ENCODE measurements at regions of chr3 and their contacts with region 1.

Region 1: DNA sequence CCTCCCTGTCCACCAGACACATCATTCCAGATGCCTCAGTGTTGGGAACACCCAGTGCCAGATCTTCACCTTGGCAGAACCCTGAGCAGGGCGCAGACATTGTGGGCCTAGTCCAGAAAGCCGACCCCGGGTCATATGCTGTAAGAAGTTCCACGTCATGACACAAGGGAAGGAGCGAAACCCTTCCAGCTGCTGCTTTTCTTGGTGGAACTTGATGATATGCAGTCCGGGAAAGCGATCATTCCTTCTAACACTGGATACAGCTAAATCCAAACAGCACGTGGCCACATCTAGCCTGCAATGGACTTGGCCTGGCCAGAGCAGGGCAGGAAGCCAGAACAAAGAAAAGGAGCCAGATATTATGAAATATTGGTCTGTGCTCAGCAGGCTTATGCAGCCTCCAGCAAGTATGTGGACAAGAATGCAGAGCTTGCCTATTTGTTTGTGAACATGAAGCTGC is 22.0 kb downstream of the GASK1A start:
- DNase-seq: peak; percentile 89 to 94
- ATAC-seq: peak; percentile 92 to 93
- H3K4me3 ChIP-seq: peak overlapping the region in 3 of 4 donors; percentile 16 to 41 (median 27)
- H3K27ac ChIP-seq: peak overlapping the region; percentile 73 to 81 (median 80)
- H3K4me1 ChIP-seq: peaks cover 41 to 47% of the 10 kb centered on the region in 2 donors
- H3K27me3 ChIP-seq: no peaks in the 10 kb centered on the region
- CTCF ChIP-seq: no peak
- POLR2A ChIP-seq: no peak

Region 2: DNA sequence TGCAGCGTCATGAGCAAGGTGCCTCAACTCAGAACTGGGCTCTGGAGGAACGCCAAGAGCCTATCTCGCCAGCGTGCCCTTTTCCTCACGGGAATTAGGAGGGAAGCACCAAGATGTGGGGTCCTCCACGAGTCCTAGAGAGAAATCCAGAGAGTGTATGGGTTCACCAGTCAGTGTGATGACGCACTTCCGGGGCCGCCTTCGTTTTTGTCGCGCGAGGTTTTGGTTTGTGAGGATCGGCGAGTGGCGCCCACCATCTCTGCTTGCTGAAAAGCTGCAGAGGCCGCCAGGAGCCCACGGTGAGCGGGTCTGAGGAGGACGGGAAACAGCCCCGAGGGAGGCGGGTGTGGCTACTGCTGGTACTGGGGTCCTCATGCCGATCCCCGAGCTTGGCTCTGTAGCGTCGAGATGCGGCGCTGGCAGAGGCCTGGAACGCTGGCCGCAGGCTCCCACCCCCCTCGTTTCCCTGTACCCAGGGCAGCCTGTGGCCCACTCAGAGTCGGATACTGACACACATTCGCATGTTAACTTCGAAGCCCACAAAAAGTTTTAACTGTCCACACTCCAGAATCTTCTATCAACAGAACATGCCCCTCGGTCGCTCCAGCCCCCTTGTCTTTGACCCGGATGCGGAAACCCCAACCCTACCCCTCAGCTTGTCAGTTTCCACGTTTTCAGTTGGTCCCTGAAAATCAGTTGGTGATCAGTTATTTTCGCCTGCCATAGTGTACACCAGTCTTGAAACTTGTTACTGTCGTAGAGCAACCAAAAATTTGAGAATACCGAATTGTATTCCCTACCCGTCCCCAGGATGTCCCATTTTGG is 64.8 kb before region 1 on chr3:
- in situ Hi-C with region 1: no loop called
- intact Hi-C with region 1: no loop called
- DNase-seq: no peak
- ATAC-seq: no peak
- H3K4me3 ChIP-seq: peak overlapping the region in 3 of 4 donors; percentile 12 to 43 (median 42)
- H3K27ac ChIP-seq: no peak overlapping the region
- H3K4me1 ChIP-seq: no peaks in the 10 kb centered on the region
- H3K27me3 ChIP-seq: no peaks in the 10 kb centered on the region
- CTCF ChIP-seq: no peak
- POLR2A ChIP-seq: no peak

Region 3: DNA sequence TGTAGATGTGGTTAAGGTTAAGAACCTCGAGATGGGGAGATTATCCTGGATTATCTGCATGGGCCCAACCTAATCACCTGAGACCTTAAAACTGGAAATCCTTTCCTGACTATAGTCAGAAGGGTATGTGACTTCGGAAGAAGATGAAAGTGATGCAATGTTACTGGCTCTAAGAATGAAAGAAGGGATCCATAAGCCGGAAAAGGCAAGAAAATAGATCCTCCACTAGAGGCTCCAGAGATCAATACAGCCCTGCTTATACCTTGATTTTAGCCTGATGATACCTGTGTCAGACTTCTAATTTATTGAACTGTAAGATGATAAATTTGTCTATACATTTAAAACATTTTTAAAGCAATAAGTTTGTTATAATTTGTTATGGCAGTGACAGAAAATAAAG is 43.6 kb before region 1 on chr3:
- in situ Hi-C with region 1: no loop called
- intact Hi-C with region 1: no loop called
- DNase-seq: no peak
- ATAC-seq: no peak
- H3K4me3 ChIP-seq: no peak overlapping the region
- H3K27ac ChIP-seq: no peak overlapping the region
- H3K4me1 ChIP-seq: no peaks in the 10 kb centered on the region
- H3K27me3 ChIP-seq: no peaks in the 10 kb centered on the region
- CTCF ChIP-seq: no peak
- POLR2A ChIP-seq: no peak

Region 4: GRCh38 chr3:43013743-43014155 is 12.6 kb after region 1 on chr3:
- in situ Hi-C with region 1: no loop called
- intact Hi-C with region 1: no loop called
- DNase-seq: no peak
- ATAC-seq: no peak
- H3K4me3 ChIP-seq: no peak overlapping the region
- H3K27ac ChIP-seq: no peak overlapping the region
- H3K4me1 ChIP-seq: no peaks in the 10 kb centered on the region
- H3K27me3 ChIP-seq: no peaks in the 10 kb centered on the region
- CTCF ChIP-seq: no peak
- POLR2A ChIP-seq: no peak

Region 5: DNA sequence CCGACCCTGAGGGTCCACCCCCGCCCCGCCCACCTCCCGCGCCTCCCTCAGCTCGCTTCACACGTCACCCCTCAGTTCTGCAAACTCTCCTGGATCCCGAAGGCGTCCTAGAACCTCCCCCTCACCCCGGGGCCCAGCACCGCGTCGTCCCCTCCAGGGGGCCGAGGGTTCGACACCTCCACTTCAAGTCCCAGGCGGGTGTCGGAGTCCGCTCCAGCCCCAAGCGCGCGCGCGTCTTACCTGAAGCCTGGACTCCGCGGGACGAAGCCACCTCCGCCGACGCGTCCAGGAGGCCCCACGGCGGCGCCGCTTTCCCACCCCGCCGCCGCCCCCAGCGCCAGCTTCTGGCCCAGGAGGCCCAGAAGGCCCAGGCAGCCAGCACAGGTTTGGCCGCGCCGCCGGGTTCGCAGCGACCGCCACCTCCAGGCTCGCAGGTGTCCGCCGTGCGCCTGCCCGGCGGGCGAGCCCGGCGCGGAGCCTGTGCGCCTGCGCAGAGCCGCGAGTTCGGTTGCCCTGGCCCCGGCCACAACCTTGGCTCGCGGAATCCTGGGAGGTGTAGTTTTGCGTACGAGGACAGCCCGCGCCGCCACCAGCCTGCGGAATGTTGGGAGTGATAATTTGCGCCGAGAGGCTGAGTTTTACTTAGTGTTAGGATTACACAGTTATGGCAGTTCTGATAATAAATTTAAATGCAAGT is 104.6 kb after region 1 on chr3 and contains the start of gene POMGNT2:
- in situ Hi-C with region 1: no loop called
- intact Hi-C with region 1: loop called (anchors 2 kb)
- DNase-seq: peak; percentile 80 to 86
- ATAC-seq: peak; percentile 94 to 96
- H3K4me3 ChIP-seq: peak within 1 kb of the TSS; percentile 78 to 95 (median 93)
- H3K27ac ChIP-seq: peak within 1 kb of the TSS; percentile 71 to 88 (median 78)
- H3K4me1 ChIP-seq: peaks cover 18 to 23% of the 10 kb centered on the region in 2 donors
- H3K27me3 ChIP-seq: no peaks in the 10 kb centered on the region
- CTCF ChIP-seq: no peak
- POLR2A ChIP-seq: peak; percentile 55 to 67
- total RNA-seq, gene POMGNT2: 20.4 to 72.8 (median 52.4) TPM